T-cell (primary cell): ENCODE measurements at regions of chr1 and their contacts with region 1.

Region 1: GRCh38 chr1:211675230-211676105 is at the start of gene NEK2:
- DNase-seq: peak; percentile 59 to 90 (median 80)
- ATAC-seq: peak; percentile 97 to 98 (median 98)
- H3K4me3 ChIP-seq: peak within 1 kb of the TSS; percentile 77 to 86
- H3K4me3 Mint-ChIP-seq: peak within 1 kb of the TSS; percentile 86 to 95 (median 89)
- H3K27ac ChIP-seq: no peak within 1 kb of the TSS
- H3K27ac Mint-ChIP-seq: peak within 1 kb of the TSS; percentile 46 to 66
- H3K4me1 ChIP-seq: peaks cover 8 to 17% of the 10 kb centered on the region in 2 experiments
- H3K4me1 Mint-ChIP-seq: peaks cover 10 to 19% (median 16%) of the 10 kb centered on the region in 3 donors
- H3K27me3 ChIP-seq: no peaks in the 10 kb centered on the region
- H3K27me3 Mint-ChIP-seq: peaks cover 0 to 4% of the 10 kb centered on the region in 2 donors
- total RNA-seq, gene NEK2: 0.16 to 0.63 (median 0.37) TPM

Region 2: DNA sequence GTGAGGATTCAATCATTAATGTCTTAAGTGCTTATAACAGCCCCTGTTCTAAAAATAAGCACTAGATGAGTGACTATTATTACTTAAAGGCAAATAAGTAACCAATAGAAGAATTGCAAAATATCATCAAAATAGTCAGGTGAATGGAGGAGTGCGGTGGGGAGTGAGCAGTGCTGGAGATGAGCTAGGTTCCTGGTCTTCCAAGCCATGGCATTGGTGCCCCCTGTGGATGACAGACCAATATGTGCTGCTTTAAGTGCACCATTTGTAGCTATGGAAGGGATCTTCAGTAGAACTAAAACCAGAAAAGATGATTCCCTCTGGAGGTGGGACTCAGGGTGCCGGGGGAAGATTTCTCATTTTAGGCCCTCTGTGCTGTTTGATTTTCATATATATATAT is 50.4 kb before region 1 on chr1:
- CTCF ChIA-PET with region 1: no interaction called
- POLR2A ChIA-PET with region 1: no interaction called
- DNase-seq: peak in 20 of 35 experiments; percentile 10 to 64 (median 24)
- ATAC-seq: peak; percentile 63 to 77 (median 68)
- H3K4me3 ChIP-seq: no peak overlapping the region
- H3K4me3 Mint-ChIP-seq: no peak overlapping the region
- H3K27ac ChIP-seq: no peak overlapping the region
- H3K27ac Mint-ChIP-seq: no peak overlapping the region
- H3K4me1 ChIP-seq: no peaks in the 10 kb centered on the region
- H3K4me1 Mint-ChIP-seq: peaks cover 6 to 10% (median 8%) of the 10 kb centered on the region in 3 donors
- H3K27me3 ChIP-seq: peaks cover 0 to 2% of the 10 kb centered on the region in 2 experiments
- H3K27me3 Mint-ChIP-seq: no peaks in the 10 kb centered on the region

Region 3: GRCh38 chr1:211698161-211699026 is 22.9 kb after region 1 on chr1:
- CTCF ChIA-PET with region 1: interaction called, 11 to 52 read pairs
- POLR2A ChIA-PET with region 1: no interaction called
- DNase-seq: peak; percentile 44 to 84 (median 75)
- ATAC-seq: peak; percentile 88 to 94 (median 90)
- H3K4me3 ChIP-seq: peak overlapping the region in 1 of 2 donors; percentile 53
- H3K4me3 Mint-ChIP-seq: peak overlapping the region; percentile 56 to 65 (median 58)
- H3K27ac ChIP-seq: no peak overlapping the region
- H3K27ac Mint-ChIP-seq: no peak overlapping the region
- H3K4me1 ChIP-seq: peaks cover 5 to 45% of the 10 kb centered on the region in 2 experiments
- H3K4me1 Mint-ChIP-seq: peaks cover 19 to 50% (median 20%) of the 10 kb centered on the region in 3 donors
- H3K27me3 ChIP-seq: peaks cover 0 to 10% of the 10 kb centered on the region in 2 experiments
- H3K27me3 Mint-ChIP-seq: no peaks in the 10 kb centered on the region